B cell (primary cell): ENCODE measurements at regions of chr19 and their contacts with region 1.

Region 1: DNA sequence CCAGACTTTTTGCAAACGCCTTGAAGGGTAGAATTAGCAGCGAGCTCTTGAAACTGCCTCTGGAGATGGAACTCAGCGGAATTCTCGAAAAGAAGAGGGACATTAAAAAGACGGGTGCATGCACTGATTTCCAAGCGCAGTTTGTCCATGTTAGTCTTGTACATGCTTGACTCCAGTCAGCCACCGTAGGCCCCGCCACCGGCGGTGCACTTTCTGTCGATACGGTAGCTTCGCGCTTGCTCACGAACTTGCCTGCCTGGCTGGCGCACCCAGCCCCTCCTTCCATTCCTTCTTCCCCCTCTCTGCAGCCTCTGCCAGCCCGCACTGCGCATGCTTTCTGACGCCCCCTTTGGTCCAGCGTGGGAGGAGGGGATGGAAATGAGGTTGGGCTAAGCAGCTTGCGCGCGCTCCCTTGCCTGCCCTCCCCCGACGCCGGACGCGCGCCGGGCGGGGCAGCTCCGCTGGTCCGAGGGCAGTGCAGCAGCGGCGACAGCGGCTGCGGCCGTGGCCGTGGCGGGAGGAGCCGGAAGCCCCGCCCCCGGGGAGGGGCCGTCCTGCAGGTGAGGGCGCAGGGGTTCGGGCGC is at the start of gene ZNF575:
- DNase-seq: peak; percentile 93
- ATAC-seq: peak; percentile 54
- H3K4me3 ChIP-seq: peak within 1 kb of the TSS; percentile 71 to 94 (median 76)
- H3K4me3 Mint-ChIP-seq: peak within 1 kb of the TSS; percentile 91
- H3K27ac ChIP-seq: peak within 1 kb of the TSS; percentile 25 to 67
- H3K27ac Mint-ChIP-seq: peak within 1 kb of the TSS; percentile 96
- H3K4me1 ChIP-seq: peaks cover 5 to 28% of the 10 kb centered on the region in 2 donors
- H3K4me1 Mint-ChIP-seq: peaks cover 26% of the 10 kb centered on the region
- H3K27me3 ChIP-seq: no peaks in the 10 kb centered on the region
- H3K27me3 Mint-ChIP-seq: no peaks in the 10 kb centered on the region
- CTCF ChIP-seq: no peak
- total RNA-seq, gene ZNF575: 4.0 and 5.2 TPM in 2 replicates

Region 2: GRCh38 chr19:43290568-43291359 is 242.3 kb before region 1 on chr19:
- CTCF ChIA-PET with region 1: no interaction called
- POLR2A ChIA-PET with region 1: no interaction called
- intact Hi-C with region 1: no loop called
- DNase-seq: peak; percentile 45
- ATAC-seq: no peak
- H3K4me3 ChIP-seq: no peak overlapping the region
- H3K4me3 Mint-ChIP-seq: no peak overlapping the region
- H3K27ac ChIP-seq: no peak overlapping the region
- H3K27ac Mint-ChIP-seq: no peak overlapping the region
- H3K4me1 ChIP-seq: no peaks in the 10 kb centered on the region
- H3K4me1 Mint-ChIP-seq: no peaks in the 10 kb centered on the region
- H3K27me3 ChIP-seq: no peaks in the 10 kb centered on the region
- H3K27me3 Mint-ChIP-seq: peaks cover under 1% of the 10 kb centered on the region
- CTCF ChIP-seq: no peak

Region 3: DNA sequence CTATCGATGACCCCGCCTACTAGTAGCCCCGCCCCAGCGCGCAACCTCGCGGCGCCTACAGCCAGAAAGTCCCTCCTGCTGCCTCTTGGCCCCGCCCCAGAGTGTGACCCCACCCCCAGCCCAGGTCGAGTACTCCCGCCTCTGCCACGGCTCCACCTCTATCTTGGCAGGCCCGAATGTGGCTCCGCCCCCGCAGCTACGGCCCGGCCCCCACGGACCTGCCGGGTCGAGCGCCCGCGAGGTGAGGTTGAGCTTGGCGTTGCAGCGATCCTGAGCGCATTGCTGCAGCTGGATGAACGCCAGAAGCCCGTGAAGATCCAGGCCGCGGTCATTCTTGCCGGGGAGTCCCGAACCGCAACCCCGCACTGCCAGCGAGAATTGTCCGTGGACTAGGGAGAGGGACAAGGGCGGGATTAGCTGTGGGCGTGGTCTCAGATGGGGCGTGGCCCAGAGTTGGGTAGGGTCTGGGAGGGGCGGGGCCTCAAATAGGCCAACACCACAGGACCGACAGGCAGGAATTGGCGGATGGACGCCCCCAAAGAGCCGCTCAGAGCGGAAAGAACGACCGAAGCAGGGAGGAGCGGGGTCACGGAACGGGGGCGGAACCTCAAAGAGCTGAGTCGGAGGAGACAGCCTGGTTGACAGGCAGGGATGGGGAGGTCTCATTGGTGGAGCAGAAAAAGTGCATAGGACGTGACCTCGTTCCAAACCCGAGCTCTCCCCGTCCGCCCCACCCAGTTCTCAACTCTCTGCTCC is 69.5 kb before region 1 on chr19:
- CTCF ChIA-PET with region 1: interaction called, 644 read pairs
- POLR2A ChIA-PET with region 1: interaction called, 9 read pairs
- intact Hi-C with region 1: loop called (anchors 1 kb)
- DNase-seq: peak; percentile 98
- ATAC-seq: peak; percentile 92
- H3K4me3 ChIP-seq: peak overlapping the region; percentile 13 to 96 (median 77)
- H3K4me3 Mint-ChIP-seq: peak overlapping the region; percentile 97
- H3K27ac ChIP-seq: peak overlapping the region; percentile 30 to 40
- H3K27ac Mint-ChIP-seq: peak overlapping the region; percentile 85
- H3K4me1 ChIP-seq: peaks cover 8 to 14% of the 10 kb centered on the region in 2 donors
- H3K4me1 Mint-ChIP-seq: peaks cover 15% of the 10 kb centered on the region
- H3K27me3 ChIP-seq: peaks cover 0 to 12% (median 5%) of the 10 kb centered on the region in 4 experiments
- H3K27me3 Mint-ChIP-seq: peaks cover 4% of the 10 kb centered on the region
- CTCF ChIP-seq: no peak

Region 4: GRCh38 chr19:43555185-43555770 is 22.2 kb after region 1 on chr19:
- CTCF ChIA-PET with region 1: interaction called, 14 read pairs
- POLR2A ChIA-PET with region 1: no interaction called
- intact Hi-C with region 1: no loop called
- DNase-seq: peak; percentile 83
- ATAC-seq: peak; percentile 94
- H3K4me3 ChIP-seq: no peak overlapping the region
- H3K4me3 Mint-ChIP-seq: no peak overlapping the region
- H3K27ac ChIP-seq: no peak overlapping the region
- H3K27ac Mint-ChIP-seq: peak overlapping the region; percentile 3
- H3K4me1 ChIP-seq: peaks cover under 1 to 10% of the 10 kb centered on the region in 2 donors
- H3K4me1 Mint-ChIP-seq: peaks cover 11% of the 10 kb centered on the region
- H3K27me3 ChIP-seq: no peaks in the 10 kb centered on the region
- H3K27me3 Mint-ChIP-seq: no peaks in the 10 kb centered on the region
- CTCF ChIP-seq: peak; percentile 83

Region 5: DNA sequence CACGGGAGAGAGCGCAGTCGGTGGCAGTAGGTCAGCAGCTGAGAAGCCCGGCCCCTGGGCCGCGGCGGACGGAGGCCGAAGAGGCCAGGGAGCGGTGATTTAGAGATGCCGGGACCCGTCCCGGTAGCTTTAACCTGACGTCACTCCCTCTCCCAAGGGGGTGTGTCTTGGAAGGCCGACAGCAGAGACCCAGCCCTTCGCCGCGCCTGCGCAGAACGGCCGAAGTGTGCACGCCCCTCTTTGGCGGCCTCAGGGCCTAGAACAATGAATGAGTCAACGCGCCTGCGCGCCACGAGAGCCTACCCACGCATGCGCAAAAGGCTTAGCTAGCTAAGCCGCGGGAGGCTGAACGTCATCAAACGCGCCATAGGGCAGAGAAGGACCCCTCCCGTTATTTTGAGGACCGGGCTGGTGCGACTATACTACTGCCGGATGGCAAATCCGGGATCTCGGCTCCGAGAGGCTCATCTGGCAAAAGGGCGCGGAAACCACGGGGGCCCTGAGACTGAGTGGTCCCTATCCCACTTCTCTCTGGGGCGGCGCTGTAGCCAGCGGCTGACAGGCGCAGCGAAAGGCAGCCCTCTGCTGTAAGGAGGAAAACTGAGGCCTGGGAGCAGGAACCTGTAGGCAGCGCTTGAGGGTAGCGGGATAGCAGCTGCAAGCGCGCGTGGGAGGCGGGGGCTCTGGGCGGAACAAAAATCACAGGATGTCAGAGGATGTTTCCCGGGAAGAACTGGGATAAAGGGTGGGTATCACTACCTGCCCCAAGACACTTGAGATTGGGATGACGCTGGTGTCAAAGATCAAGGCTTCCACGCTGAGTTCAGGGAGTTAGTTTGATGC is 63.2 kb after region 1 on chr19 and contains the starts of genes IRGQ and ZNF576:
- CTCF ChIA-PET with region 1: interaction called, 20 read pairs
- POLR2A ChIA-PET with region 1: interaction called, 4 read pairs
- intact Hi-C with region 1: loop called (anchors 1 kb)
- DNase-seq: peak; percentile 100
- ATAC-seq: peak; percentile 88
- H3K4me3 ChIP-seq: peak within 1 kb of the TSS; percentile 61 to 88 (median 73)
- H3K4me3 Mint-ChIP-seq: peak within 1 kb of the TSS; percentile 98
- H3K27ac ChIP-seq: peak within 1 kb of the TSS; percentile 95 to 97
- H3K27ac Mint-ChIP-seq: peak within 1 kb of the TSS; percentile 99
- H3K4me1 ChIP-seq: peaks cover 16 to 38% of the 10 kb centered on the region in 2 donors
- H3K4me1 Mint-ChIP-seq: peaks cover 43% of the 10 kb centered on the region
- H3K27me3 ChIP-seq: no peaks in the 10 kb centered on the region
- H3K27me3 Mint-ChIP-seq: no peaks in the 10 kb centered on the region
- CTCF ChIP-seq: no peak
- total RNA-seq, gene IRGQ: 20.3 and 20.5 TPM in 2 replicates
- total RNA-seq, gene ZNF576: 17.3 and 23.2 TPM in 2 replicates

Region 6: DNA sequence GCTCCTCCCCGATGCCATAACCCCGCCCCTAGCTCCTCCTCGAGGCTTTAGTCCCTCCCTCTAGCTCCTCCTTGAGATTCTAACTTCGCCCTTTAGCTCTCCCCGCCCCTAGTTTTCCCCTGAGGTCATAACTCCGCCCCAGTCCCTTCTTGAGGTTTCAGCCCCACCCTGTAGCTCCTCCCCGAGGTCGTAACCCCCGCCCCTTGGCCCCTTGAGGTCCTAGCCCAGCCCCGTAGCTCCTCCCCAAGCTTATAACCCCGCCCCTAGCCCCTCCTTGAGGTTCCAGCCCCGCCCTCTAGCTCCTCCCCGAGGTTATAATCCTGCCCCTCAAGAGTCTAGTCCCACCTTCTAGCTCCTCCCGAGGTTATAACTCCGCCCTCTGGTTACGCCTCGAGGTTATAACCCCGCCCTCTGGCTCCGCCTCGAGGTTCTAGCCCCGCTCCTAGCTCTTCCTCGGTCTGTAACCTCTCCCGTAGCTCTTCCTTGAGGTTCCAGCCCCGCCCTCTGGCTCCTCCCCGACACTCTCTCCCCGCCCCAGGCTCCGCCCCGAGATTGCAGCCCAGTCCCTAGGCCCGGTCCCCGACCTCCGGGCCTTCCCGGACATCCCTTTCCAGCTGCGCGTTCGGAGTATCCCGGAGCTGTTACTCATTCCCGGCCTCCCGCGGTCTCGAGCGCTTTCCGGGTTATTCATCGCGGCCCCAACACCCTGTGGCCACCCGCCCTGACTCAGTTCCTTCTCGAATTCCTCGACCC is 135.5 kb after region 1 on chr19:
- CTCF ChIA-PET with region 1: no interaction called
- POLR2A ChIA-PET with region 1: interaction called, 4 read pairs
- intact Hi-C with region 1: loop called (anchors 1 kb)
- DNase-seq: peak; percentile 92
- ATAC-seq: peak; percentile 85
- H3K4me3 ChIP-seq: peak overlapping the region; percentile 35 to 79 (median 59)
- H3K4me3 Mint-ChIP-seq: peak overlapping the region; percentile 84
- H3K27ac ChIP-seq: no peak overlapping the region
- H3K27ac Mint-ChIP-seq: peak overlapping the region; percentile 39
- H3K4me1 ChIP-seq: peaks cover 35 to 42% of the 10 kb centered on the region in 2 donors
- H3K4me1 Mint-ChIP-seq: peaks cover 37% of the 10 kb centered on the region
- H3K27me3 ChIP-seq: peaks cover 0 to 27% (median 7%) of the 10 kb centered on the region in 4 experiments
- H3K27me3 Mint-ChIP-seq: peaks cover 14% of the 10 kb centered on the region
- CTCF ChIP-seq: no peak